ENCODE measurements at regions of chr3 and their contacts with region 1.

Region 1: DNA sequence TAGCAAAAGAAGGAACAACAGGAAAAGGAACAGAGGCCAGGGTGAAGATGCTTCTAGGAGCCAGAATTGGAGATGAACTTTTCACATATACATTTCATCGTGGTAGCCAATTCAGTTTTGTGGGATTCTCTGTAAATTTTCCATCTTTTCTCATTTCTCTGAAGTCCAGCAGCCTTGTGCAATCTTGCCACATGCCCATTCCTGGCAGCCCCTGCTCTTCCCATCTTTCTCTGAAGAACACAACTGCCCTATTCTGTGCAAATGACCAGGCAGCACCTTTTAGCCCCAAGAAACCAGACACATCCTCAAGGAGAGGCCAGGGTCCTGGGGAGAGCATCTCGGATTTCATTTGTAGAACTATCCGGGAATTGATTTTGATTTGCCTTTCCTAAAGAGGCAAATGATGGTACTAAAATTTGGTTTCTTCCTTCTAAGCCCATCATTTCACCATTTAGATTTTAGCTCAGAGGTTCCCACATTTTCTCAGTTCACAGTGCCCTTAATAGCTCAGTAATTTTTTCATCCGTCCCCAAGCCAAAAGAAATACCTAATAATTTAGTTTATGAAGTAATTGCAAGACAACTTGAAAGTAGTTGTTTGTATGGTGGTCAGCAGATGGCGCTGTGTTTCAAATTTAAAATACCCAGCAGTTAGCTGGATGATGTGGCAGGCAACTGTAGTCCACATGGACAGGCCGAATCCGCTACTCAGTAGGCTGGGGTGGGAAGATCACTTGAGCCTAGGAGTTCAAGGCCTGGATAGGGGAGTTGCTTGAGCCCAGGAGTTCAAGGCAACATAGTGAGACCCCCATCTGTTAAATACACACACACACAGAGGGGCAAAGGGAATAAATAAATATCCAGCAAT is 61.3 kb upstream of the ACKR4 start:
- DNase-seq: peak; percentile 51
- H3K4me3 ChIP-seq: no peak overlapping the region
- H3K27me3 ChIP-seq: no peaks in the 10 kb centered on the region
- CTCF ChIP-seq: peak; percentile 52; the same call in 1 of the 2 replicates

Region 2: GRCh38 chr3:132311841-132312240 is 224.0 kb before region 1 on chr3:
- CTCF ChIA-PET with region 1: no interaction called
- POLR2A ChIA-PET with region 1: no interaction called
- DNase-seq: no peak
- H3K4me3 ChIP-seq: no peak overlapping the region
- H3K27me3 ChIP-seq: no peaks in the 10 kb centered on the region
- CTCF ChIP-seq: no peak

Region 3: DNA sequence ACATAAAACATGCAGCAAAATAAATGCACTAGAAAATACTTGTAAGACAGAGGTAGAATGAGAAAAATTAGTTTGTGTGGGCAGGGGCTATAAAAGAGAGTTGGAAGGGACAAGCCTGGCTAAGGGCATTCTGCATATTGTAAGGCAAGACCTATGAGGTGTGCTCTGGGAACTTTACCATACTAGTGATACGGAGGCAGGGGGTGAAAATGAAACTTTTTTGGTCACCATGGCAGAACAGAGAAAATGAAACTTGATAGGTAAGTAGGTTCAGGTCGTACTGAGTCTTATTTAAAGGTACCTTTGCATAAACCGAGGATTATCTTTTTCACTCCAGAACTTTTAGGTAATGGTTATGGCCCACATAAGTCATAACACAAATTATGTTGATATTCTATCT is 13.5 kb before region 1 on chr3:
- CTCF ChIA-PET with region 1: interaction called, 19 read pairs
- POLR2A ChIA-PET with region 1: no interaction called
- DNase-seq: no peak
- H3K4me3 ChIP-seq: no peak overlapping the region
- H3K27me3 ChIP-seq: no peaks in the 10 kb centered on the region
- CTCF ChIP-seq: no peak

Region 4: GRCh38 chr3:132641837-132642538 is 106.2 kb after region 1 on chr3:
- CTCF ChIA-PET with region 1: interaction called, 137 read pairs
- POLR2A ChIA-PET with region 1: no interaction called
- DNase-seq: no peak
- H3K4me3 ChIP-seq: no peak overlapping the region
- H3K27me3 ChIP-seq: no peaks in the 10 kb centered on the region
- CTCF ChIP-seq: peak; percentile 59

Region 5: GRCh38 chr3:132659365-132660051 is 123.7 kb after region 1 on chr3 and contains the start of gene ACAD11:
- CTCF ChIA-PET with region 1: interaction called, 14 read pairs
- POLR2A ChIA-PET with region 1: interaction called, 3 read pairs
- DNase-seq: no peak
- H3K4me3 ChIP-seq: peak within 1 kb of the TSS; percentile 64
- H3K27me3 ChIP-seq: no peaks in the 10 kb centered on the region
- CTCF ChIP-seq: peak; percentile 79
- polyA plus RNA-seq, gene ACAD11: 19.6 and 25.5 TPM in 2 replicates